ENCODE measurements at regions of chr18 and their contacts with region 1.

Region 1: GRCh38 chr18:63741769-63742168 is 33.4 kb upstream of the SERPINB7 start:
- DNase-seq: no peak
- H3K4me3 ChIP-seq: no peak overlapping the region
- H3K27ac ChIP-seq: no peak overlapping the region
- H3K4me1 ChIP-seq: no peaks in the 10 kb centered on the region; a peak in 1 of 7 replicates
- H3K27me3 ChIP-seq: no peaks in the 10 kb centered on the region
- CTCF ChIP-seq: peak in 2 of 3 experiments; percentile 28 to 45; a peak in 2 of 4 replicates
- EP300 ChIP-seq: no peak
- POLR2A ChIP-seq: no peak
- RAD21 ChIP-seq: peak; percentile 66

Region 2: GRCh38 chr18:63505566-63506335 is 236.0 kb before region 1 on chr18:
- CTCF ChIA-PET with region 1: interaction called, 21 read pairs
- POLR2A ChIA-PET with region 1: no interaction called
- DNase-seq: peak in 1 of 2 experiments; percentile 81
- H3K4me3 ChIP-seq: no peak overlapping the region
- H3K27ac ChIP-seq: no peak overlapping the region
- H3K4me1 ChIP-seq: no peaks in the 10 kb centered on the region; a peak in 1 of 7 replicates
- H3K27me3 ChIP-seq: no peaks in the 10 kb centered on the region
- CTCF ChIP-seq: peak in 2 of 3 experiments; percentile 66 to 88; a peak in 3 of 4 replicates
- EP300 ChIP-seq: no peak
- POLR2A ChIP-seq: no peak
- RAD21 ChIP-seq: peak; percentile 59 to 70

Region 3: DNA sequence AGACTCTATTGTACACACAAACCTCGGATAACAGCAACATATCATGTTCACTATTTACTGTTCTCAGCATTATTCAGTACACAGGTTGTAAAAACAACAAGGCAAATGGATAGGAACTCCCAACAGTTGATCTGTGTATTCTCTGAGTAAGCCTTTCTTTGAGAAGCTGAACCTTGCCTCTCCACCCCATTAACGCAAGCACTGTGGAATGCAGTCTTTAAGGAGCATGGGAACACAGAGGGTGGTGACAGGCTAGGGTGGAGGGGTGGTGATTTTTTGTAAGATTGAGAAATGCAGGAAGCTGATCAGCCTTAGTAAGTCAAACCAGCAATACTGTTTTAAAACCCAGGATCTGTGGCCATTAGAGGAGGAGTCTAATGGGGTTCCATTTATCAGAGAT is 58.6 kb before region 1 on chr18:
- CTCF ChIA-PET with region 1: interaction called, 11 read pairs
- POLR2A ChIA-PET with region 1: no interaction called
- DNase-seq: peak in 1 of 2 experiments; percentile 15
- H3K4me3 ChIP-seq: no peak overlapping the region
- H3K27ac ChIP-seq: no peak overlapping the region
- H3K4me1 ChIP-seq: peaks cover 1 to 6% (median 5%) of the 10 kb centered on the region in 4 experiments; a peak in 4 of 7 replicates
- H3K27me3 ChIP-seq: no peaks in the 10 kb centered on the region
- CTCF ChIP-seq: no peak
- EP300 ChIP-seq: no peak
- POLR2A ChIP-seq: no peak
- RAD21 ChIP-seq: no peak